Ovary (tissue), 10 donors: ENCODE measurements at regions of chr11 and their contacts with region 1.

Region 1: DNA sequence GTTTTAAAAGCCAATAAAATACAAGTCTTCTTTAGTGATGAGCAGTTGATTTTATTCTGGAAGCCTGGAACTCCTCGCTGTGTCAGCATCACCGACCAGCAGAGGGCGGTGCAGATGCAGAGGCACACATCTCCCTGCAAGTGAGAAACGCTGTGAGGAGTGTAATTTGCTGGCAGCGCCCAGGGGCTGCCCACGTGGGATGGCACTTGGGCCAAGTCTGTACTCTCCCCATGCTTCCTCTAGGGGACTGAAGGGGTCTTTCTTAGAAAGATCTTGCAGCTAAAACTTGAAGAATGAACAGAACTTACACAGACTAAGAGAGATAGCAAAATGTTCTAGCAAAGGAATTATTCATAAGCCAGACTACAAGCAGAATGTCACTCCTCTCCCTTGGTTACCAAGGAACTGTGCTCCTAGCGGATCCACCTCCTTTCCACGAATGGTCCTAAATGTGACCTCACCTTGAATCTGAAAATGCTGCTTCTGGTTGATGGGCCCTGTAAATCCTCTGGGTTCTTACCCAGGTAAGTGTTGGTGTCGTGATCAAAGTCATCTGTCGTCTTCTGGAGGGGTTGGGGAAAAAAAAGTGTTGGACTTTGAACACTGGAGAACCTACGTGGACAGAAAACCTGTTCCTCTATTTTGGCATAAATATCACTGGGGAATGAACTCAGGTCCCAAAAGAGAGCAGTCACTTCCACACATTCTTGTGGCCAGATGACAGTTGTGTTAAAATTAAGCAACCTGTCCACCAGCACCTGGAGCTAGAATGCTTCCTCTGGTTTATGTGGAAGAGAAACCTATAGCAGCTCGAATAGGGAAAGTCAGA is 31.8 kb downstream of the CNTF start:
- DNase-seq: peak; percentile 62 to 86 (median 71)
- H3K4me3 ChIP-seq: no peak overlapping the region
- H3K27ac ChIP-seq: no peak overlapping the region
- H3K4me1 ChIP-seq: peaks cover 2% of the 10 kb centered on the region
- H3K27me3 ChIP-seq: no peaks in the 10 kb centered on the region
- CTCF ChIP-seq: peak; percentile 31 to 48 (median 40)
- EP300 ChIP-seq: no peak
- POLR2A ChIP-seq: no peak

Region 2: DNA sequence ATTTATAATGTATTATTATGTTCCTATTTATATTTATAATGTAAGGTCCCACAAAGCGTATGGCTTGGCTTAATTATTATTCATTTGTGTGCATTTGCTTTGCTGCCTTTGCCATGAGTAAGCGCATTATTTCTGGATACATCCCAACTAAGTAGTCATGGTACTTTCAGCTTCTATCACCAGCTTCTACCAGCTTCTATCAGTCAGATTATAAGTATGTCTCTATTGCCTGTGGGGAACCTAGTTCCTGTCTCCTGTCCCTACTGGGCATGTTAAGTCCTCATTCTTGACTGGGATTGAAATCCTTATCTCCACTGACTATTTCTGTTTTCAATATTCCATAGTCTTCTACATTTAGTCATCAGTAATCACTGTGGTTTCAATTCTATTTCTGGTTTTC is 352.7 kb before region 1 on chr11:
- intact Hi-C with region 1: no loop called
- DNase-seq: no peak
- H3K4me3 ChIP-seq: no peak overlapping the region
- H3K27ac ChIP-seq: no peak overlapping the region
- H3K4me1 ChIP-seq: no peaks in the 10 kb centered on the region
- H3K27me3 ChIP-seq: no peaks in the 10 kb centered on the region
- CTCF ChIP-seq: no peak
- EP300 ChIP-seq: no peak
- POLR2A ChIP-seq: no peak

Region 3: GRCh38 chr11:58788355-58789023 is 134.2 kb after region 1 on chr11:
- intact Hi-C with region 1: loop called in 1 of 4 experiments (anchors 10 kb)
- DNase-seq: peak in 3 of 5 donors; percentile 18 to 34 (median 31)
- H3K4me3 ChIP-seq: no peak overlapping the region
- H3K27ac ChIP-seq: no peak overlapping the region
- H3K4me1 ChIP-seq: no peaks in the 10 kb centered on the region
- H3K27me3 ChIP-seq: no peaks in the 10 kb centered on the region
- CTCF ChIP-seq: no peak
- EP300 ChIP-seq: no peak
- POLR2A ChIP-seq: no peak

Region 4: DNA sequence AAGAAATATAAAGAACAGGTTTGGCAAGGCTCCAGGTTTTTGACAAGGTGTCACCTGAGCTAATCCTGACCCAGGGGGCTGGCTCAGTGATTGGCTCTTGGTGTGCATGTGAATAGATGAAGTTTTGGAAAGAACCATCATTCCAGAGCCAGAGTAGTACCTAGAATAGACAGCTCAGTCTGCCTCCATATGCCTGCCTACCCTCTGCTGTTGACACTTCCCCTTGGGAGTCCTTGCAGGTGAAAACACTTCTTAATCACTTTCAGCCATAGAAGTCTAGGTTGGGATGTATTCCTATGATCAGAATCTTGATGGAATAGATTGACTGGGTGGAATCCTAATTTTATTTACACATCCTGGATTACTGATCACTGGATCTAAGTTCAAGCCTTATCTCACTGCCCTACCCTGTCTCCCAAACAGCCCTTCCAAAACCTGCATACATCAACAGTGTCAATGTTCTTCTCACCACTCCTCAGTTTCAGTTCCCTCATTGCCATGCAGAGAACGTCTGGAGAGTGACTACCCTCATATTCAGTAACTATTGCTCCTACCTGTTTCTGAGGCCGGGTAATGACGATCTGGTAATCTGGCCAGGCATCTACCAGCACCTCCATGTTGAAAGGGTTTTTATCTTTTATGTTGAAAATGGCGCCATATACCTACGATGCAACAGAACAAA is 183.6 kb after region 1 on chr11:
- intact Hi-C with region 1: no loop called
- DNase-seq: no peak
- H3K4me3 ChIP-seq: no peak overlapping the region
- H3K27ac ChIP-seq: no peak overlapping the region
- H3K4me1 ChIP-seq: no peaks in the 10 kb centered on the region
- H3K27me3 ChIP-seq: no peaks in the 10 kb centered on the region
- CTCF ChIP-seq: no peak
- EP300 ChIP-seq: no peak
- POLR2A ChIP-seq: no peak

Region 5: DNA sequence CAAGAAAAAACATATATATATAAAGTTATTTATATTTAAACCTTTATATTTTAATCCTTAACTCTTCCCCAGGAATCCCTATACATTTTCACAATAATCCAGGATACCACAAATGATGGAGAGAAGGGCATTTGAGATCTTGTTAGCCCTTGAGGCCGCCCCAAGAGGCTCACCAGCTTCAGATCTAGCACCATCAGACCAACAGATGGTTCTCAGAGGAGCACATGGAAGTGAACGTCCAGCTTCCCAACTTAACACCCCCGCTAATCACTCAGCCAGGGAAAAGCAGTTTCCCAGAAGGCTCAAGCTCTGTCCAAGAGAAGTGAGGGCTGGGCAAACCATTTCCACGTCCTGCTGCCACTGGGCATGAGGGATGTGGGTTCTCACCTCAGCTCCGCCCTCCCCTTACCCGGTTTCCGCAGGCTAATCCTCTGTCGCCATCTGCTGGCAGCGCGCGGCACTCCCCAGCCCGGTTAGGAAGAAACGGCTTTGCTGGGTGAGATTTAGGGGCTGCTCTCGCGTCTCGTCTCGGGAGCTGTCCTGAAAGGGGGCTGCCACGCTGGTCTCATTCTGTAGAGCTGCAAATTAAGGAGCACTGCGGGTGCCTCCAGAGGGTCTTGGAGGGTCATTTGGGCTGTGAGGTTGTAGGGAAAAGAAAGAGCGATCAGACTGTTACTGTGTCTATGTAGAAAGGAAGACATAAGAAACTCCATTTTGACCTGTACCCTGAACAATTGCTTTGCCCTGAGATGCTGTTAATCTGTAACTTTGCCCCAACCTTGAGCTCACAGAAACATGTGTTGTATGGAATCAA is 481.6 kb after region 1 on chr11:
- intact Hi-C with region 1: loop called in 1 of 4 experiments (anchors 10 kb)
- DNase-seq: peak; percentile 68 to 86 (median 79)
- H3K4me3 ChIP-seq: no peak overlapping the region
- H3K27ac ChIP-seq: no peak overlapping the region
- H3K4me1 ChIP-seq: no peaks in the 10 kb centered on the region
- H3K27me3 ChIP-seq: no peaks in the 10 kb centered on the region
- CTCF ChIP-seq: peak; percentile 75 to 89 (median 77)
- EP300 ChIP-seq: no peak
- POLR2A ChIP-seq: no peak